BJ (cell line): ENCODE measurements at regions of chr4 and their contacts with region 1.

Region 1: GRCh38 chr4:113292371-113293042 is 243.1 kb downstream of the ANK2 start:
- DNase-seq: no peak
- H3K4me3 ChIP-seq: no peak overlapping the region
- H3K27me3 ChIP-seq: no peaks in the 10 kb centered on the region
- CTCF ChIP-seq: no peak

Region 2: GRCh38 chr4:113069212-113069892 is 223.2 kb before region 1 on chr4:
- CTCF ChIA-PET with region 1: no interaction called
- POLR2A ChIA-PET with region 1: no interaction called
- DNase-seq: no peak
- H3K4me3 ChIP-seq: no peak overlapping the region
- H3K27me3 ChIP-seq: no peaks in the 10 kb centered on the region; the same call in 1 of the 2 replicates
- CTCF ChIP-seq: no peak

Region 3: DNA sequence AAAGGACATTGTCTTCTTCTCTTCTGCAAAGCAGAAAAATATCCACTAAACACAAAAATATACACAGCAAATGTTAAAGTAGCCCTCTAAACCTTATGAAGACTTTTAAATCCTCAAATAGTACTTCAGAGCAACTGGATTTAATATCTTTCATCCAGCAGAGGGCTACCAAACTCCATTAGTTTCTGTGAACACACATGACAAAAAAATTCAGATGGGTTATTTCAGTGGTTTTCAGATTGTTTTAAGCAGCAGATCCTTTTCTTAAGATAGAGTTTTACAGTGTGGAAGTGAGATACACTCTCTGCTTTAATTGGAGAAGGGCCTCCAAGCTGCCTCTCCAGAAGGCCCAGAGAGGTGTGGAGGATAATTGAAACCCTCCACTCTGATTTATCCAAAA is 186.4 kb before region 1 on chr4:
- CTCF ChIA-PET with region 1: interaction called, 11 read pairs
- POLR2A ChIA-PET with region 1: no interaction called
- DNase-seq: peak; percentile 11
- H3K4me3 ChIP-seq: no peak overlapping the region
- H3K27me3 ChIP-seq: no peaks in the 10 kb centered on the region
- CTCF ChIP-seq: peak; percentile 44

Region 4: GRCh38 chr4:113278324-113278934 is 14.1 kb before region 1 on chr4:
- CTCF ChIA-PET with region 1: interaction called, 27 read pairs
- POLR2A ChIA-PET with region 1: no interaction called
- DNase-seq: no peak
- H3K4me3 ChIP-seq: no peak overlapping the region
- H3K27me3 ChIP-seq: no peaks in the 10 kb centered on the region
- CTCF ChIP-seq: peak; percentile 93